ENCODE measurements at regions of chr2 and their contacts with region 1.

Region 1: DNA sequence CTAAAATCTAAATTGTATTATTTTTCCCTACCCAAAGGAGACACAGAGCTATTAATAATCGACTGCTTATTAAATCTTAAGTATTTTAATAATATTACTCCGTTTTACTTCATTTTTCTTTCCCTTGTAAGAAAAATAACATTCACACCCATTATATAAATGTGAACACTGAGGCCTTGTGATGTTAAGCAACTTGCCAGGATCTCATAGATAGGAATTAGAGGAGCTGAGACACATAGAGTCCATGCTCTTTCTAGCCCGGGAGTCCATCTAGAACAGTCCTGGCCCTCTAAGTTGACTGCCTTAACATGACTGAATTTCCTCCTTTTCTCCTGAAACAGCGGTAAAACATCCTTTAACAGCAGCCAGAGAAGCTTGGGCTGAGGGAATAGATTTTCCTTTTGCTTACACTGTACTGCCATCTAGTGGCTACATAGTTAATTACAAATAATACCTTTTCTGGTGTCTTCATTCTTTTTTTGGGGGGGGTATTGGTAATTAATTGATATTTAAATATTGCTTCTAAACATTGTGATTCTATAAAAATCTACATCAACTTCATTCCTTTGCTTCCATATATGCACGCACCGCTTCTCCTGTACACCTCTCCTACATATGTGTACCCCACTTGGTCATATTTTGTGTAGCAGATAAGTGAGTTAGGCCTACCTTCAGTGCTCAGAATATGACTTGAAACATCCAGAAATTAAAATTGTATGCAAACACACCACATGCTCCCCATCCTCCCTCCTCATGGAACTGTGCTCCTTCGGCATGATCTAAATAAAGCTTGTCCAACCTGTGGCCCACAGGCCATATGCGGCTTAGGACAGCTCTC is 125.8 kb upstream of the HNMT start:
- DNase-seq: no peak
- ATAC-seq: no peak

Region 2: GRCh38 chr2:136423516-136423996 is 1414.9 kb before region 1 on chr2:
- intact Hi-C with region 1: loop called (anchors 5 kb)
- DNase-seq: peak; percentile 83
- ATAC-seq: peak; percentile 91

Region 3: GRCh38 chr2:136932700-136933099 is 905.8 kb before region 1 on chr2:
- intact Hi-C with region 1: loop called (anchors 10 kb)
- DNase-seq: no peak
- ATAC-seq: no peak

Measured in Right ventricle myocardium inferior (tissue), 1 donor.